ENCODE measurements at regions of chr19 and their contacts with region 1.

Region 1: DNA sequence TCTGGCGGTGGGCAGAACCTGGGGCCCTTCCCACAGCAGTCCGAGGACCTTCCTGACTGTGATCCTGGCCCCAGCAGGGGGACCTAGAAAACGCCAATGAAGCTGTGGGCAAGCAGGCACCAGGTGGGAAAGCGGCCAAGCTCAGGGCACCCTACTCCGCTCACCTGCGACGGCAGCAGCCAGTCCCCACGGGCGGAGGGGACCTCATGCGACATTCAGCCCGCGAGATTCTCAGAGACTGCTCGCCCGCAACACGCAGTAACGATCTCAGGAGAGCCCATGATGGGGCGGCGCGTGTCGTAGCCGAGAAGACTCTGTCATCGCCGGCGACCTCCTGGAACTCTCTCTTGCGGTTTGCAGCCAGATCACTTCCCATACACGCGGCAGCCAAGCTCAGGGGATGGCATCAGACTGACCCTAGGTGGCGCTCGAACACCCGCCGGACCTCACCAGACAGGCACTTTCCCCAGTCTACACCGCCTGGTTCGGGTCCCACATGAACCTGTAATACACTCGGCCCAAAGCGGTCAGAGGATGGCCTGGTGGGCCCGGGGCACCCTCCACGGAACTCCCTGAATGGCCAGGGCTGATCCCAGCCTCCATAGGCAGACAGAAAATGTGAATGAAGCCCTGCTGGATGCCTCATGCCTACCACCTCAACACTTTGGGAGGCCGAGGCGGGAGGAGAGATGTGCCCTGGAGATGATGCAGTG is 26.5 kb downstream of the MAN2B1 start:
- DNase-seq: peak; percentile 37
- H3K4me3 ChIP-seq: peak overlapping the region; percentile 40
- CTCF ChIP-seq: peak; percentile 84

Region 2: DNA sequence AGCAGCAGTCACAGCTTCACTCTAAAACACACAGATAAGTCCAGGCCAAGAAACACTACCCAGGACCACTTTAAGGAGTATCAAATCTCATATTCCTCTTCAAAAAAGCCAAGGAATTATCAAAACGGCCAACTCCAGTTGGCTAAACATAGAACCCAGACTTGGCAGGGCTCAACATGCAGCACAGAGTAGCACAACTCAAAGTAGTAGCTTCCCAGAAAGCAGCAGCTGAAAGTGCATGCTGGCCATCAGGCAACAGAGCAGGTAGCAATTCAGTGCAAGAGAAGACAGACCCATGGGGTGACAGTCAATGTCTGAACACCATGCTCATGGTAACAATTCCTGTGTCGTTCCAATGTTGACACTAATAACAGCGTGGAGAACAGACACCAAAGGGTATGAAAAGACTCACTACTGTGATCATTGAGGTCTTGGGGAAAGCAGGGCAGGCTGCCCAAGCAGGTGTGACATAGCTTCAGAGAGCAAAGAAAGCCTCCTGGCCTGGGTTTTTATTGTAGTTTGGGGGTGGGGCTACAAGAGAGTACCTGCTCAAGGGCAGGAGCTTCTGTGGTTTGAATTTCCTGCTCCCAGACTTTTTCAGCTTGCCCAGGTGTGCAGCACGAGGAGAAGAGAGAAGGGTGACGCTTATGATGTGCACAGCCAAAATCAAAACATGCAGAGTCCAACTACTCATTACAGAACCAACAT is 161.7 kb before region 1 on chr19:
- CTCF ChIA-PET with region 1: no interaction called
- POLR2A ChIA-PET with region 1: no interaction called
- DNase-seq: no peak
- H3K4me3 ChIP-seq: no peak overlapping the region
- CTCF ChIP-seq: no peak

Region 3: DNA sequence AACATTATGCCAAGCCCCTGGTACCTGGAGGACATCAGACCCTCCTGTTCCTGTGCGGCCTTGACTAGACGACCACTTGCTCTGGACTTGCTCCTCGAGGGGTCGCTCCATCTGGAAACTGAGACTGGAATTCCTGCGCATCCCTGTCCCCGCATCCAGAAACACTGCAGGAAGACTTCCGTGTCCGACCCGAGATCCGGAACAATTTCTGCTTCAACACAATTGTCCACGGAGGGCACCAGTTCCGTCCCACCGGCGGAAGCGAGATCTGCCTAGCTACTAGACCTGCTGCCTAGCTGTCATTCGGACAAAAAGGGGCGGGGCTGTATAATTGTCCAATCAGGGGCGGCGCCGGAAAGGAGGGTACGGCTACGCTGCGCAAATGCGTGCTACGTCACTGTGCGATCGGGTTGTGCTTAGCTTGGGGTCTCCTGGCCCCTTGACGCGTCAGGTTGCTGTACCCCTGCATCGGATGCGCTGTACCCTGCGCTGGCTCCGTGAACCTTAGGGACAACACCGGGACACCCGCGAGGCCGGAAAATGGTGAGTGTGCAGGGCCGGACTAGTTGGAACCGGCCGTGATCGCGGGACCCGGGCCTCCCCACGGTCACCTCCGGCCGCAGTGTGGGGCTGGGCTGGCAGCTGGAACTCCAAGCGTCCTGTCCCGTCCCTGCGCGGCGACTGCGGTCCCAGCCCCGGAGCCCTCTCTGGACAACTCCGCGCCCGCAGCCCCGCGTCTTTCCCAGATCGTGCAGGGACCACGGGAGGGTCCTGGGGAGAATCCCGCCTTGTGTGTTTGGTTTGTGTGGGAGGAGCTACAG is 29.3 kb before region 1 on chr19 and contains the starts of genes ZNF490 and ZNF791:
- CTCF ChIA-PET with region 1: interaction called, 11 read pairs
- POLR2A ChIA-PET with region 1: interaction called, 4 read pairs
- DNase-seq: peak; percentile 73
- H3K4me3 ChIP-seq: peak within 1 kb of the TSS; percentile 100
- CTCF ChIP-seq: no peak

Region 4: DNA sequence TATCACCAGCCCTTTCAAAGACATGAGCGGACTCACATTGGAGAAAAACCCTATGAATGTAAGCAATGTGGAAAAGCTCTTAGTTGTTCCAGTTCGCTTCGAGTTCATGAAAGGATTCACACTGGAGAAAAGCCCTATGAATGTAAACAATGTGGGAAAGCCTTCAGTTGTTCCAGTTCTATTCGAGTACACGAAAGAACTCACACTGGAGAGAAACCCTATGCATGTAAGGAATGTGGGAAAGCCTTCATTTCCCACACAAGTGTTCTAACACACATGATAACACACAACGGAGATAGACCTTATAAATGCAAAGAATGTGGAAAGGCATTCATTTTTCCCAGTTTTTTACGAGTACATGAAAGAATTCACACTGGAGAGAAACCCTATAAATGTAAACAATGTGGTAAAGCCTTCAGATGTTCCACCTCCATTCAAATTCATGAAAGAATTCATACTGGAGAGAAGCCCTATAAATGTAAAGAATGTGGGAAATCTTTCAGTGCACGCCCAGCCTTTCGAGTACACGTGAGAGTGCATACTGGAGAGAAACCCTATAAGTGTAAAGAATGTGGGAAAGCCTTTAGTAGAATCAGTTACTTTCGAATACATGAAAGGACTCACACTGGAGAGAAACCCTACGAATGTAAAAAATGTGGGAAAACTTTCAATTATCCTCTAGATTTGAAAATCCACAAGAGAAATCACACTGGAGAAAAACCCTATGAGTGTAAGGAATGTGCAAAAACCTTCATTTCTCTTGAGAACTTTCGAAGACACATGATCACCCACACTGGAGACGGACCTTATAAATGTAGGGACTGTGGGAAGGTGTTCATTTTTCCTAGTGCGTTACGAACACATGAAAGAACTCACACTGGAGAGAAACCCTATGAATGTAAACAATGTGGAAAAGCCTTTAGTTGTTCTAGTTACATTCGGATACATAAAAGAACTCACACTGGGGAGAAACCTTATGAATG is 11.7 kb before region 1 on chr19:
- CTCF ChIA-PET with region 1: interaction called, 13 read pairs
- POLR2A ChIA-PET with region 1: no interaction called
- DNase-seq: no peak
- H3K4me3 ChIP-seq: no peak overlapping the region
- CTCF ChIP-seq: no peak

Region 5: DNA sequence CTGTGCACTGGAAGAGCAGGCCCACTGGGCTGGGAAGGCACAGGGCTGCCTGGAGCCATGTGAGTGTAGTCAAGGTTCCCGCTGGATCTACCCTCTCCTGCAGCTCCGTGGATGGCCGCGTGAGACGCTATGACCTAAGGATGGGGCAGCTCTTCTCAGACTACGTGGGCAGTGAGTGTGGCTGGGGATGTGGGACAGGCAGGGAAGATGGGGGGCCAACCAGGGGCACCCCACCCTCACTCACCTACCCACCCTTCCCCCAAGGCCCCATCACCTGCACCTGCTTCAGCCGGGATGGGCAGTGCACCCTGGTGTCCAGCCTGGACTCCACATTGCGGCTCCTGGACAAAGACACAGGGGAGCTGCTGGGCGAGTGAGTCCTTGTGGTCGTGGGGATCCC is 32.7 kb after region 1 on chr19:
- CTCF ChIA-PET with region 1: interaction called, 16 read pairs
- POLR2A ChIA-PET with region 1: no interaction called
- DNase-seq: no peak
- H3K4me3 ChIP-seq: no peak overlapping the region
- CTCF ChIP-seq: no peak

Measured in AG04449 (cell line).